Right ventricle myocardium inferior (tissue), 1 donor: ENCODE measurements at regions of chr6 and their contacts with region 1.

Region 1: DNA sequence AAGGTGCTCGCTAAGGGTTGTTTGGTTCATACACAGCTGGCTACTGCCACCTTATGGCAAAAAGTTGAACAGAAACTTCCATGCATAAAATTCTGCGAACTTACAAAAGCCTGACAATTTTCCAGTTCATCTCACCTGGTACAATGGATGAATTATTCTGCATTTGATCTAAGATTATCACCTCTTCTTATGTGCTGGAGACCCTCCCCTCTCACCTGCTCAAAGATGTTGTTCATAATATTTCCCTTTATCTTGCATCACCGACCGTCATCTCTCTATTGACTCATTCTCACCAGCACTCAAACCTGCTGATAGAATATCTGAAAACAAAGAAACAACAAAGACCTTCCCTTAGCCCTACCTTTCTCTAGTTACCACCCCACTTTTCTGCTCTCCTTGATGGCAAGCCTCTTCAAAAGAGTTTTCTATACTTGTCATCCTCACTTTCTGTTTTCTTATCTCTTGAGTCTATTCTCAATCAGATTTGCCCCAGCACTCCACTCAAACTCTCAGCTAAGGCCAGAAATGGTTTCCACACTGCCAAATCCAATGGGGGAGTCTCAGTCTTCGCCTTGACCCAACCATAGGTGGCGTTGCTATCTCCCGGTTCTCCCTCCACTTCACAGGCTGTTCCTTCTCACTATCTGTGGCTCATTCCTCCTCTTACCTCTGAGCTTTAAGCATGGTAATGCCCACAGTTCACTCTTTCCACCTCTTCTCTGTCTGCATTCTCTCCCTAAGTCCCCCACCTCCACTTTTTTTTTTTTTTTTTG is 25.8 kb downstream of the SNRNP48 start:
- DNase-seq: no peak
- ATAC-seq: peak; percentile 18

Region 2: GRCh38 chr6:6676910-6677441 is 938.8 kb before region 1 on chr6:
- intact Hi-C with region 1: loop called (anchors 10 kb)
- DNase-seq: no peak
- ATAC-seq: peak; percentile 71

Region 3: GRCh38 chr6:7276199-7276524 is 339.6 kb before region 1 on chr6:
- intact Hi-C with region 1: loop called (anchors 5 kb)
- DNase-seq: no peak
- ATAC-seq: no peak